ENCODE measurements at regions of chr14 and their contacts with region 1.

Region 1: DNA sequence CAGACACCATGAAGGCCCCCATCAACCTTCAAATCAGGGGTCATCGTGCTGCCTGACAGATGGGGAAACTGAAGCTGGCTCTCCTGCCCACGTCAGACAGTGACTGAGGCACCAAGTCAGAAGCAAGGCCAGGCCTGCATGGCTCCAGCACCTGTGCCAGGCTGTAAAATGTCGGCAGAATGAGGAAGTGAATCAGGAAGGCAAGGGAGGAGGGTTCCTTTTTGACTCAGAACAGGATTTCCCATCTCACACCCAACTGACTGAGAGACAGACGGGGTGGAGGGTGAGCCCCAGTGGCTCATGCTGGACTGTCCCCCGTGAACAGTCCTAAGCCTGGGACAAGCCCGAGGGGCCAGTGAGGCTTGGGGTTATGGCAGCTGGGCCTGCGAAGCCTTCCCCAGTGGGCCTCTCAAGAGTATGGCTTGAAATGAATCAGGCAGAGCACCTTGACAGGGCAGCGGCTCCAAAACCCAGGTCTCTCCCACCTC is 20.9 kb downstream of the SYNE3 start:
- DNase-seq: peak; percentile 71
- H3K4me3 Mint-ChIP-seq: peak overlapping the region; percentile 18
- H3K27ac Mint-ChIP-seq: peak overlapping the region; percentile 92
- H3K4me1 Mint-ChIP-seq: peaks cover 53% of the 10 kb centered on the region
- H3K27me3 Mint-ChIP-seq: no peaks in the 10 kb centered on the region

Region 2: GRCh38 chr14:95460647-95461478 is 34.7 kb before region 1 on chr14:
- intact Hi-C with region 1: loop called (anchors 5 kb)
- DNase-seq: no peak
- H3K4me3 Mint-ChIP-seq: no peak overlapping the region
- H3K27ac Mint-ChIP-seq: no peak overlapping the region
- H3K4me1 Mint-ChIP-seq: peaks cover 34% of the 10 kb centered on the region
- H3K27me3 Mint-ChIP-seq: no peaks in the 10 kb centered on the region

Region 3: GRCh38 chr14:95480109-95480886 is 15.3 kb before region 1 on chr14:
- intact Hi-C with region 1: loop called (anchors 1 kb)
- DNase-seq: peak; percentile 79
- H3K4me3 Mint-ChIP-seq: peak overlapping the region; percentile 38
- H3K27ac Mint-ChIP-seq: peak overlapping the region; percentile 95
- H3K4me1 Mint-ChIP-seq: peaks cover 35% of the 10 kb centered on the region
- H3K27me3 Mint-ChIP-seq: no peaks in the 10 kb centered on the region

Region 4: GRCh38 chr14:95515596-95516552 is 20.3 kb after region 1 on chr14:
- intact Hi-C with region 1: loop called (anchors 2 kb)
- DNase-seq: peak; percentile 96
- H3K4me3 Mint-ChIP-seq: peak overlapping the region; percentile 95
- H3K27ac Mint-ChIP-seq: peak overlapping the region; percentile 90
- H3K4me1 Mint-ChIP-seq: peaks cover 60% of the 10 kb centered on the region
- H3K27me3 Mint-ChIP-seq: no peaks in the 10 kb centered on the region

Region 5: GRCh38 chr14:95561001-95561412 is 65.4 kb after region 1 on chr14:
- intact Hi-C with region 1: no loop called
- DNase-seq: peak; percentile 97
- H3K4me3 Mint-ChIP-seq: no peak overlapping the region
- H3K27ac Mint-ChIP-seq: no peak overlapping the region
- H3K4me1 Mint-ChIP-seq: peaks cover 2% of the 10 kb centered on the region
- H3K27me3 Mint-ChIP-seq: peaks cover 4% of the 10 kb centered on the region

Measured in activated CD4-positive, alpha-beta T cell treated with anti-CD3 and anti-CD28 coated beads, Interleukin-2, amount 10 ng/mL, durations not matched to agents 24 days and 14 days (primary cell).